Right ventricle myocardium inferior (tissue), 1 donor: ENCODE measurements at regions of chr13 and their contacts with region 1.

Region 1: GRCh38 chr13:23871616-23872220 is 17.5 kb downstream of the MIPEP start:
- DNase-seq: no peak
- ATAC-seq: peak; percentile 20

Region 2: DNA sequence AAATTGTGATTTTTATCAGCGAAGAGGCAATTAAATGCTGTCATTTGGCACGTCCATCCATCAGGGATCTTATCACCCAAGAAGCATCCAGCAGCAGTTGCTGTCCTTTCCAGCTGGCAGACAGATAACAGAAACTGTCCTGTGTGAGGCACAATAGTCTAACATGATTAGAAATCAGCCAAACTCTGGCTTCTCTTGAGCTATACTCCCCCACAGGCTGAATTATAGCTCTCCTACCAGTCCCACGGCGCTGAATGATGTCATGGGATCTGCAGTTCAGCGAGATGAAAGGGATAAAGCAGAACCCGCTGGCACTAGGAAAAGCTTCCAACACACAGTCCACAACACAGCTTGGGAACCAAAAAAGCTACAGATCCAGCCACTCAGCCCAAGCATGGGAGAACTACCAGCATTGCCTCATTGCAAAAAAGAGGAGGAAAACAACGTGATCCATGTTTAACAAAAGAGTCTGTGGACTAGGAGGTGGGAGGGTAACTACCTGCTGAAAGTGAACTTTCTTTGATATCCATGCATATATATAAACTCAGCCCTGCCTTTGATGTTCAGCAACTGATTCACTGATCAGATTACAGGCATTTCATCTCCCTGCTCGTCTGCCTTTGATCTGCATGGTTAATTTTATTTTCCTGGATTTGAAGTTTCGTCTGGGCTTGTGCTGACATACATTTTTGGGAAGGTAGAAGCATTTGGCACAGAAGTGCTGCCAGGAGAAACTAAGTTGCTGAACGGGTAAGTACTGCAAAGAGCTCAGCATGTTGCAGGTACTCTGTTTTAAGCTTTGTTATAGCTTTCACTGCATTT is 301.4 kb before region 1 on chr13 and contains the start of gene TNFRSF19:
- intact Hi-C with region 1: loop called (anchors 5 kb)
- DNase-seq: no peak
- ATAC-seq: peak; percentile 94
- total RNA-seq, gene TNFRSF19: 36.5 TPM

Region 3: GRCh38 chr13:23715762-23716235 is 155.9 kb before region 1 on chr13:
- intact Hi-C with region 1: loop called (anchors 5 kb)
- DNase-seq: no peak
- ATAC-seq: peak; percentile 44

Region 4: GRCh38 chr13:24280720-24281119 is 409.0 kb after region 1 on chr13:
- intact Hi-C with region 1: no loop called
- DNase-seq: no peak
- ATAC-seq: no peak